Activated T-helper 1 cell treated with anti-CD3 and anti-CD28 coated beads, Interleukin-12 subunit alpha, Interleukin-12 subunit beta, Interleukin-2, Interleukin-4 antibody, amounts not matched to agents 30 ng/mL and 10 ng/mL and 1 ng/mL, durations not matched to agents 14 hours and 24 hours and 36 hours (primary cell): ENCODE measurements at regions of chr12 and their contacts with region 1.

Region 1: DNA sequence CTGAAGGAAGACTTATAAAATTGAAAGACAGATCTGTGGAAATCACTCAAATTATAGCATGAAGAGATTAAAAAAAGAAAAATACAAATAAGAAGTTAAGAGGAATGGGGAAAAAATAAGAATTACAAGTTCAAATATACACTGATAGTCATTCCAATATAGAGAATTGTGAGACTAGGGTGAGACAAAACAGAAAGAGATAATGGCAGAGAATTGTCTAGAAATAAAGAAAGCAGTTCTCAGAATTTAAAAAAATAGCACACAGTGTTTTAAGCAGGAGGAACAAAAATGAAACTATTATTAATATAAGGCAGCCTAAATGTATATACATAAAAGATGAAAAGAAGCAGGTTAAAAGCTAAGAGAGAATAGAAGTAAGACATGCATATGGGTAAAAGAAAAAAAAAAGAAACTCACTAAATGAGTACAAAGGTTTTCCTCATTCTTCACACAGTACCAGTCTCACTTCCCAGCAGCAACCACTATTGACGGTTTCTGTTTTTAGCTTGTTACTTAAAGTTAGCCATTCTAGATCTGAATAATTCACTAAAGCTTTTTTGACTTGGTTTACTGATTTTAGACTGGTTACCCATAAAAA is 31.1 kb downstream of the SLC38A4 start:
- DNase-seq: no peak
- H3K4me3 Mint-ChIP-seq: no peak overlapping the region
- H3K27ac Mint-ChIP-seq: peak overlapping the region; percentile 64
- H3K4me1 Mint-ChIP-seq: peaks cover 19% of the 10 kb centered on the region
- H3K27me3 Mint-ChIP-seq: peaks cover 2% of the 10 kb centered on the region

Region 2: DNA sequence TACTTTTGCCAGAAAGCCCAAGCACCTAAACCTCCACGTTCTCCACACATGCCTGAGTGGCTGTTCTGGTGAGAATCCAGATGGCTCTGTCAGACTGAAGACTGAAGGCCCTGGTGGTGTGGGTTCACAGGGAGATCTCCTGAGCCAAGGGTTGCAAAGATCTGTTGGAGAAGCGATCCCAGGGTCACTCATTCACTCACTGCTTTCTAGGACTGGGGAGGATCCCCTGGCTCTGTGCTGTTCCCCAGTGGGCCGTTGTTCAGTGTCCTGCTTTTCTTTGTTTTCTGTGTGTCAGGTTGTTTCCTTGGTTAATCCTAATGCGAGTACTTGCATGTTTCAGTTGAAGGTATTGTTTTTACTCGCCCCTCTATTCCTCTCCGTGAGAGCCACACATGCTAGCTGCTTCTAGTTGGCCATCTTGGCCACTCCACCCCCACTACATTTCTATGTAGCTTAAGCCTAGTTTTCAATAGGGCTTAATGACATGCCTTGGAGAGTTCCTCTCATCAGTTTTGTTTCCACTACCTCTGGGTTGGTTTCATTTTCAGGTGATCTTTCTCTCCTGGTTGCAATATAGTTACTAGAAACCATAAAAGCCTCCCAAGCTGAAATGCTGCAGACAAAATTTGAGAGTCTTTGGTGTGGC is 277.6 kb before region 1 on chr12:
- intact Hi-C with region 1: loop called (anchors 10 kb)
- DNase-seq: no peak
- H3K4me3 Mint-ChIP-seq: peak overlapping the region; percentile 74
- H3K27ac Mint-ChIP-seq: peak overlapping the region; percentile 98
- H3K4me1 Mint-ChIP-seq: peaks cover 60% of the 10 kb centered on the region
- H3K27me3 Mint-ChIP-seq: no peaks in the 10 kb centered on the region

Region 3: GRCh38 chr12:46763230-46763629 is 31.5 kb before region 1 on chr12:
- intact Hi-C with region 1: loop called (anchors 2 kb)
- DNase-seq: no peak
- H3K4me3 Mint-ChIP-seq: no peak overlapping the region
- H3K27ac Mint-ChIP-seq: no peak overlapping the region
- H3K4me1 Mint-ChIP-seq: no peaks in the 10 kb centered on the region
- H3K27me3 Mint-ChIP-seq: no peaks in the 10 kb centered on the region